PC-9 (cell line): ENCODE measurements at regions of chr5 and their contacts with region 1.

Region 1: DNA sequence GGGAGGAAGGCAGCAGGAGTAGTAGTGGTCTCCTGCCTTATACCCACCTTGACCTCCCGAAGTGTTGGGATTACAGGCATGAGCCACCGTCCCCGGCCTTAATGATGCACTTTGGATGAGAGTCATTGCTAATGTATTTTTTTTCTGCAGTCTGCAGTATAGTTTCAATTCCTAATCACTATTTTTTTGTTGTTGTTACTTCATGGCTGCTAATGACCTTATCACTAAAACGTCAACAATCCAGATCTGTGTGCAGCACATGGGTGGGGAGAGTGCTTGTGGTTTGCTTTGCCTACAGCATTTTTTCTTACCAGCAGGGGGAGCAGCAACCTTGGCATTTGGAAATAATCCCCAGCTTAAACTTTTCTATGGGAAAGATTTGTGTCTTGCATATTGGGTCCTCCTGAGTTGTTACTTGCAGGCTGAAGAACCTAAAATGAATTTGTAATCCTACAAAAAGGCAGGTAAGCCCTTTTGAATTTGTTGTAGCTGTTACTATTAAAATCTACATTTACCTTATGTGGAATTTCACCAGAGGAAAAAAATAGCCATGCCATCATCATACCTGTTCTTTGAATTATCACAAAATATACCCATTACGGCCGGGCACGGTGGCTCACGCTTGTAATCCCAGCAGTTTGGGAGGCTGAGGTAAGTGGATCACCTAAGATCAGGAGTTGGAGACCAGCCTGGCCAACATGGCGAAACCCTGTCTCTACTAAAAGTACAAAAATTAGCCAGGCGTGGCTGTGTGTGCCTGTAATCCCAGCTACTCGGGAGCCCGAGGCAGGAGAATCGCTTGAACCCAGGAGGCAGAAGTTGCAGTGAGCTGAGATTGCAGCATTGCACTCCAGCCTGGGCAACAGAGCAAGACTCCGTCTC is 6.3 kb upstream of the MED7 start:
- DNase-seq: peak in 1 of 2 experiments; percentile 54
- H3K4me3 ChIP-seq: no peak overlapping the region
- H3K27ac ChIP-seq: no peak overlapping the region
- H3K4me1 ChIP-seq: peaks cover under 1% of the 10 kb centered on the region; the same call in 1 of the 2 replicates
- H3K27me3 ChIP-seq: peaks cover 27% of the 10 kb centered on the region
- CTCF ChIP-seq: peak; percentile 90

Region 2: DNA sequence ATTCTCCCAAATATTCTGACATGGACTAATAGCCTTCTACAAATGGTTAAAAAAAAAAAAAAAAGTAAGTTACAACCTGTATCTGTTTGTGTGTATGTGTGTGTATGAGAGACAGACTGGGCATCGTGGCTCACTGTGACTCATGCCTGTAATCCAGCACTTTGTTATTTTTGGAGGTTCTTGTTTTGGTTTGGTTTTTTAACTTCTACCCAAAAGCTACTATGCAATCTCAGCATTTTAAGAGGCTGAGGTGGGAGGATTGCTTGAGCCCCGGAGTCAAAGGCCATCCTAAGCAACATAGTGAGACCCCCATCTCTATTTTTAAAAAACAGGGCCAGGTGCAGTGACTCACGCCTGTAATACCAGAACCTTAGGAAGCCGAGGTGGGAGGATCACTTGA is 72.4 kb before region 1 on chr5:
- CTCF ChIA-PET with region 1: no interaction called
- POLR2A ChIA-PET with region 1: no interaction called
- intact Hi-C with region 1: no loop called
- DNase-seq: peak in 1 of 2 experiments; percentile 9
- H3K4me3 ChIP-seq: no peak overlapping the region
- H3K27ac ChIP-seq: no peak overlapping the region
- H3K4me1 ChIP-seq: peaks cover 19% of the 10 kb centered on the region
- H3K27me3 ChIP-seq: no peaks in the 10 kb centered on the region
- CTCF ChIP-seq: no peak

Region 3: DNA sequence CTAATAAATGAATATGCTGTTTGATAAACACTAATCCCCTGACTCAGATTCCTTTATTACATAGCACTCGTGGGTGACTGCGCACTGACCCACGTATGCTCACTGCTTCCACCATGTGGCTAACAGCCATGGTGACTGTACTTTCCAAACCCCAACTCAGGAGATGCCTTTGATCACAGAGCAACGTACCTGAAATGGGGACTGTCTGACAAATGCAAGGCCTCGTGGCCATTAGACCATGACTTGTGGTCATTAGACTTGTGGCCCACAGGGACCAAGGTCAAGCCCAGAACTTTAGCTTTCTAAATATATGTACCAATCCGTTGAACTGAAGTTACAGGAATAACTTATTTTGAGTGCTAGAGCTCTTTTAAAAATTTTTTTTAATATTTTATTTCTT is 163.5 kb after region 1 on chr5:
- CTCF ChIA-PET with region 1: no interaction called
- POLR2A ChIA-PET with region 1: no interaction called
- intact Hi-C with region 1: loop called (anchors 5 kb)
- DNase-seq: no peak
- H3K4me3 ChIP-seq: no peak overlapping the region
- H3K27ac ChIP-seq: no peak overlapping the region
- H3K4me1 ChIP-seq: no peaks in the 10 kb centered on the region
- H3K27me3 ChIP-seq: peaks cover 36% of the 10 kb centered on the region
- CTCF ChIP-seq: peak; percentile 63